WTC11 (cell line): ENCODE measurements at regions of chr14 and their contacts with region 1.

Region 1: GRCh38 chr14:55731881-55732498 is 152.0 kb downstream of the KTN1 start:
- DNase-seq: peak; percentile 59
- ATAC-seq: peak; percentile 79
- H3K4me3 Mint-ChIP-seq: no peak overlapping the region
- H3K27ac Mint-ChIP-seq: no peak overlapping the region
- H3K4me1 Mint-ChIP-seq: no peaks in the 10 kb centered on the region
- H3K27me3 Mint-ChIP-seq: no peaks in the 10 kb centered on the region
- CTCF ChIP-seq: peak; percentile 62

Region 2: GRCh38 chr14:55699131-55700057 is 32.6 kb before region 1 on chr14:
- CTCF ChIA-PET with region 1: no interaction called
- POLR2A ChIA-PET with region 1: no interaction called
- DNase-seq: no peak
- ATAC-seq: peak; percentile 58
- H3K4me3 Mint-ChIP-seq: no peak overlapping the region
- H3K27ac Mint-ChIP-seq: no peak overlapping the region
- H3K4me1 Mint-ChIP-seq: peaks cover 26% of the 10 kb centered on the region
- H3K27me3 Mint-ChIP-seq: no peaks in the 10 kb centered on the region
- CTCF ChIP-seq: no peak

Region 3: DNA sequence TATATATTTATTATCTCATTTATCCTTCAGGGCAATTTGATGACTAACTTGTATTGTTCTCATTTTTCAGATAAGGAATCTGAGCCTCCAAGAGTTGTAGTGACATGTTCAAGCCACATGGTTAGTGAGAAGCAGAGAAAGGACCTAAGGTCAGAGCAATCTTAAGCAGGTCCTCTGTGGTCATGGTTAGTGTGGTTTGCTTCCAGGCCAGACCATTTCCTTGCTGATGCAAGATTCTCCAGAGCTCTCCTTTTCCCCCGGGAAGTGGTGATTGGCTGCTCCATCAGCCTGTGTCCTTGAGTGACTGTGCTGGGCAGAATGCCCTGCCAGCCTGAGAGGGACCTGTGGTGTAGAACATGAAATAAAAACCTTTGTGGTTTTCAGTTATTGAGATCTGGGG is 10.6 kb before region 1 on chr14:
- CTCF ChIA-PET with region 1: interaction called, 14 read pairs
- POLR2A ChIA-PET with region 1: no interaction called
- DNase-seq: no peak
- ATAC-seq: peak; percentile 43; the same call in 1 of the 2 replicates
- H3K4me3 Mint-ChIP-seq: no peak overlapping the region
- H3K27ac Mint-ChIP-seq: no peak overlapping the region
- H3K4me1 Mint-ChIP-seq: no peaks in the 10 kb centered on the region
- H3K27me3 Mint-ChIP-seq: no peaks in the 10 kb centered on the region
- CTCF ChIP-seq: no peak

Region 4: DNA sequence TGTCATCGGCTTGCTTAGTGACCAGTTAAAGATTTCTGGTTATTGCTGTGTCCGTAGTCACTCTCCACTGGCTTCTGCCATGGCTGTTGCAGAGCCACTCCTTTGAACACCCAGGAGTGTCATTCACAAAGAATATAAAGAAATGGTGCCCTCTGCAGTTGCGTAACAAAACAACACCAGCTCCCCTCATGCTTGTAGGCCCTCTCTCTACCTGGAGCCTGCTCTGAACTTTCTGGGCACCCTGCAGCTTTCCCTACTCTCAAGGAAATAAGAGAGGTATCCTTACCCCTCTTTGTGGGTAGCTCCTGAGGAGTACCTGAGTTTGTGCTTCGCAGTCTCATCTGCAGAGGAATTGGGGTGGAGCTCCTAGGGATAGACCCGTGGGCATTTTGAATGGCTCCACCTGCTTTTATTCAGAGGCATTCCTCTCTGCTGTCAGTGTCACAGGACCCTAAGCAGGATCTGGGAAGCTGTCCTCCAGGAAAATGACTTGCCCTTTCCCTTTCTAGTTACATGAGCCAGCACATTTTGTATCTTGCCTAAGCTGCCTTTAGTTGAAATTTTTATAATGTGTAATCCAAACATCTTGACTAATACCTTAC is 750.4 kb after region 1 on chr14:
- CTCF ChIA-PET with region 1: interaction called, 10 read pairs
- POLR2A ChIA-PET with region 1: no interaction called
- DNase-seq: peak; percentile 58
- ATAC-seq: peak; percentile 96
- H3K4me3 Mint-ChIP-seq: no peak overlapping the region
- H3K27ac Mint-ChIP-seq: no peak overlapping the region
- H3K4me1 Mint-ChIP-seq: peaks cover 8% of the 10 kb centered on the region
- H3K27me3 Mint-ChIP-seq: no peaks in the 10 kb centered on the region
- CTCF ChIP-seq: no peak; the same call in none of the 2 replicates